Ascending aorta (tissue), 2 donors: ENCODE measurements at regions of chr14 and their contacts with region 1.

Region 1: GRCh38 chr14:64681796-64682710 is 22.2 kb upstream of the PLEKHG3 start:
- DNase-seq: peak; percentile 67 to 94
- H3K4me3 ChIP-seq: peak overlapping the region in 1 of 2 donors; percentile 21
- H3K27ac ChIP-seq: peak overlapping the region; percentile 93 to 94
- H3K4me1 ChIP-seq: peaks cover 7 to 28% of the 10 kb centered on the region in 2 donors
- H3K27me3 ChIP-seq: no peaks in the 10 kb centered on the region
- CTCF ChIP-seq: no peak

Region 2: DNA sequence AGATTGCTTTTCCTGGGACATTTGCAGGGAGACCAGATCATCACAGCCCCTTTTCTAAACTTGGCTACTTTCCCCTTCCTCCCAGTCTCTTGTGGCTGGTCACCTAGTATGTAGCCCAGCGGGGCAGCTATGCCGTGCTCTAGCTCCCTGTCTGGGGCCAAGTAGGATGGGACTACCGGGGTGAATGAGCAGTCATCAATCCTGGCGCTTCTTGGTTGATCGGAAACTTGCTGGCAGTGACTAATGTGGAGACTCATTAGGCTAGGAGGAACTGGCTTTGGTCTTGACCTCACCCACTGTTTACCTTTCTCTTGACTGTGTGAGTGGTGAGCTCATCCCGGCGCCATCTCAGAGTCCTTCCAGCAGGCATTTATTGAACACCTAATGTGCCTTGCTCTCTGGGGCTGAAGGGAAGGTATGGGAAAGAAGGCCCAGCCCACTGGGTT is 38.1 kb after region 1 on chr14:
- intact Hi-C with region 1: loop called (anchors 5 kb)
- DNase-seq: peak; percentile 10 to 68
- H3K4me3 ChIP-seq: no peak overlapping the region
- H3K27ac ChIP-seq: peak overlapping the region; percentile 89 to 96
- H3K4me1 ChIP-seq: peaks cover 29 to 93% of the 10 kb centered on the region in 2 donors
- H3K27me3 ChIP-seq: no peaks in the 10 kb centered on the region
- CTCF ChIP-seq: no peak

Region 3: DNA sequence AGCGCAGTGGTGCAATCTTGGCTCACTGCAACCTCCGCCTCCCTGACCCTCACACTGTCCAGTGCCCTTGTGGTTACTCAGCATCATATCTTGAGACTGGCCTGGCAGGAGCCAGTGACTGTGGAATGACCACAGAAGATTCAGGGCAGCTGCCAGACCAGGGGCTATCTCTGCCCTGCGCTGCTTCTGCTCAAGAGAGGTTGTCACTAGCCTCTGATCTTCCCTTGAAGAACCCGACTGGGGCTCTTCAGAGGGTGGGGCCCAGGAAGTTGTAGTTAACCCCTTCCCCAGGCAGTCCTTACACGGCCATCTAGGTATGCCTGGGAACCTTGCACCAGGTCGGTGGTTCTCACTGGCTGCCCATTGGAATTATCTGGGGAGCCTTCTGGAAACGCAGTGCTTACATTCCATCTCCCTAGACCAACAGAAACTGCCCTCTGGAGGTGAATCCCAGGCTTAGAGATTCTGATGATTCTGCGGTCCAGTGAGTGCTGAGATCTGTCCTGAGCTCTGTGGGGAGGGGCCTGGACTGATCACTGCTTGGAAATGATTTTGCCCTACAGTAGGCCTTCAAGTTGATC is 63.5 kb after region 1 on chr14:
- intact Hi-C with region 1: loop called (anchors 2 kb)
- DNase-seq: no peak
- H3K4me3 ChIP-seq: no peak overlapping the region
- H3K27ac ChIP-seq: peak overlapping the region; percentile 78 to 84
- H3K4me1 ChIP-seq: peaks cover 6 to 25% of the 10 kb centered on the region in 2 donors
- H3K27me3 ChIP-seq: no peaks in the 10 kb centered on the region
- CTCF ChIP-seq: peak in 1 of 3 experiments; percentile 26

Region 4: DNA sequence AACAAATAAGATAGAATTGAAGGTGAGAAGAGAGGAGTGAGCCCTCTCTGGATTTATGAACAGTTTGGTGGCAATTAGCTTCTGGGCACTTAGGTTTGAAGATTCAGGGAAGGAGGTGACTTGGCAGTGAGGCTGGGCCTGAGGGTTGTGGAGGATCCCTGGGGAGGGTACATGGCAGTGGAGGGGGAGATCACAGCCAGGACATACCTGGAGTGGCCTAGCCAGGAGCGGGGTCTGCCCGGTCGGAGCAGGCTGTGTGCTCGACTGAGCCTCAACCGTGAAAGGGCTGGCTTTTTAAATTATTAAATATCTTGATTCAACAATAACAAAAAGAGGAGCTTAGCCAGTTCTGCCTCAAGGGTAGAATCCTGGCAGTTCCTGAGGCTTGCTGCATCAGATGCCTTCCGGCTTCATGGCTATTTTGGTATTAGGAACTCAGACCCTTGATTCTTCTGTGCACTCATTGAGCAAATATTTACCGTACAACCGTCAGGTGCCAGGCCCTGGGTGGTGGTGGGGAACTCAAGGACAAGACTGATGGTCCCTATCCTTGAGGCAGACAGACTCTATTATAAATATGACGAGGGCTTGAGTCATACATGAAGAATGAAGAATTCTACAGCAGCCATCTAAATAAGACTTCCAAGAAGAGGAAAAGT is 124.3 kb after region 1 on chr14:
- intact Hi-C with region 1: loop called (anchors 5 kb)
- DNase-seq: peak; percentile 44 to 90
- H3K4me3 ChIP-seq: no peak overlapping the region
- H3K27ac ChIP-seq: peak overlapping the region; percentile 92 to 93
- H3K4me1 ChIP-seq: peaks cover 8 to 25% of the 10 kb centered on the region in 2 donors
- H3K27me3 ChIP-seq: no peaks in the 10 kb centered on the region
- CTCF ChIP-seq: no peak